T-cell (primary cell): ENCODE measurements at regions of chr19 and their contacts with region 1.

Region 1: GRCh38 chr19:43446746-43447489 is 18.5 kb downstream of the LYPD3 start:
- DNase-seq: peak; percentile 58 to 90 (median 77)
- ATAC-seq: peak; percentile 88 to 94 (median 90)
- H3K4me3 ChIP-seq: no peak overlapping the region
- H3K4me3 Mint-ChIP-seq: no peak overlapping the region
- H3K27ac ChIP-seq: no peak overlapping the region
- H3K27ac Mint-ChIP-seq: peak overlapping the region in 1 of 2 donors; percentile 76
- H3K4me1 ChIP-seq: peaks cover 0 to 13% of the 10 kb centered on the region in 2 experiments
- H3K4me1 Mint-ChIP-seq: peaks cover 27 to 39% (median 39%) of the 10 kb centered on the region in 3 donors
- H3K27me3 ChIP-seq: no peaks in the 10 kb centered on the region
- H3K27me3 Mint-ChIP-seq: no peaks in the 10 kb centered on the region

Region 2: DNA sequence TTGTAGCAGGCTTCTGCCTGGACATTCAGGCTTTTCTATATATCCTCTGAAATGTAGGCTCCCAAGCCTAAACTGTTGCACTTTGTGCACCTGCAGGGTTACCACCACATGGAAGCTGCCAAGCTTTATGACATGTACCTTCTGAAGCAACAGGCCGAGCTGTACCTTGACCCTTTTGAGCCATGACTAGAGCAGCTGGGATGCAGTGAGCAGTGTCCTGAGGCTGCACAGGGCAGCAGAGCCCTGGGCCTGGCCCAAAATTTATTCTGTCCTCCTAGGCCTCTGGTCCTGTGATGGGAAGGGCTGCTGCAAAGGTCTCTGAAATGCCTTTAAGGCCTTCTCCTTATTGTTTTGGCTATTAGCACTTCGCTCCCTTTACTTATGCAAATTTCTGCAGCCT is 116.9 kb before region 1 on chr19:
- CTCF ChIA-PET with region 1: no interaction called
- POLR2A ChIA-PET with region 1: no interaction called
- DNase-seq: no peak
- ATAC-seq: no peak
- H3K4me3 ChIP-seq: no peak overlapping the region
- H3K4me3 Mint-ChIP-seq: no peak overlapping the region
- H3K27ac ChIP-seq: no peak overlapping the region
- H3K27ac Mint-ChIP-seq: no peak overlapping the region
- H3K4me1 ChIP-seq: peaks cover 0 to 2% of the 10 kb centered on the region in 2 experiments
- H3K4me1 Mint-ChIP-seq: no peaks in the 10 kb centered on the region
- H3K27me3 ChIP-seq: peaks cover 0 to 4% of the 10 kb centered on the region in 2 experiments
- H3K27me3 Mint-ChIP-seq: peaks cover 3 to 9% of the 10 kb centered on the region in 2 donors

Region 3: GRCh38 chr19:43416951-43417623 is 29.8 kb before region 1 on chr19:
- CTCF ChIA-PET with region 1: interaction called in 1 of 2 experiments, 10 read pairs
- POLR2A ChIA-PET with region 1: no interaction called
- DNase-seq: no peak
- ATAC-seq: no peak
- H3K4me3 ChIP-seq: no peak overlapping the region
- H3K4me3 Mint-ChIP-seq: no peak overlapping the region
- H3K27ac ChIP-seq: no peak overlapping the region
- H3K27ac Mint-ChIP-seq: no peak overlapping the region
- H3K4me1 ChIP-seq: no peaks in the 10 kb centered on the region
- H3K4me1 Mint-ChIP-seq: no peaks in the 10 kb centered on the region
- H3K27me3 ChIP-seq: peaks cover 0 to 8% of the 10 kb centered on the region in 2 experiments
- H3K27me3 Mint-ChIP-seq: peaks cover 0 to 1% of the 10 kb centered on the region in 2 donors

Region 4: GRCh38 chr19:43503501-43504425 is 56.8 kb after region 1 on chr19:
- CTCF ChIA-PET with region 1: interaction called, 3 to 18 read pairs
- POLR2A ChIA-PET with region 1: no interaction called
- DNase-seq: peak; percentile 96 to 100 (median 99)
- ATAC-seq: peak; percentile 91 to 98 (median 94)
- H3K4me3 ChIP-seq: peak overlapping the region; percentile 75 to 78
- H3K4me3 Mint-ChIP-seq: peak overlapping the region; percentile 88 to 97 (median 90)
- H3K27ac ChIP-seq: peak overlapping the region; percentile 83
- H3K27ac Mint-ChIP-seq: peak overlapping the region; percentile 96 to 97
- H3K4me1 ChIP-seq: peaks cover 2 to 34% of the 10 kb centered on the region in 2 experiments
- H3K4me1 Mint-ChIP-seq: peaks cover 38 to 42% (median 40%) of the 10 kb centered on the region in 3 donors
- H3K27me3 ChIP-seq: no peaks in the 10 kb centered on the region
- H3K27me3 Mint-ChIP-seq: no peaks in the 10 kb centered on the region

Region 5: GRCh38 chr19:43526884-43527859 is 80.3 kb after region 1 on chr19 and contains the start of gene ETHE1:
- CTCF ChIA-PET with region 1: interaction called, 8 to 12 read pairs
- POLR2A ChIA-PET with region 1: interaction called in 1 of 2 experiments, 5 read pairs
- DNase-seq: peak in 32 of 35 experiments; percentile 18 to 74 (median 47)
- ATAC-seq: peak; percentile 79 to 86 (median 84)
- H3K4me3 ChIP-seq: peak within 1 kb of the TSS; percentile 81 to 93
- H3K4me3 Mint-ChIP-seq: peak within 1 kb of the TSS; percentile 73 to 89 (median 74)
- H3K27ac ChIP-seq: peak within 1 kb of the TSS; percentile 66
- H3K27ac Mint-ChIP-seq: peak within 1 kb of the TSS; percentile 86 to 91
- H3K4me1 ChIP-seq: peaks cover 7 to 32% of the 10 kb centered on the region in 2 experiments
- H3K4me1 Mint-ChIP-seq: peaks cover 23 to 34% (median 30%) of the 10 kb centered on the region in 3 donors
- H3K27me3 ChIP-seq: no peaks in the 10 kb centered on the region
- H3K27me3 Mint-ChIP-seq: no peaks in the 10 kb centered on the region
- total RNA-seq, gene ETHE1: 19.1 to 39.4 (median 34.7) TPM